ENCODE measurements at regions of chr13 and their contacts with region 1.

Region 1: DNA sequence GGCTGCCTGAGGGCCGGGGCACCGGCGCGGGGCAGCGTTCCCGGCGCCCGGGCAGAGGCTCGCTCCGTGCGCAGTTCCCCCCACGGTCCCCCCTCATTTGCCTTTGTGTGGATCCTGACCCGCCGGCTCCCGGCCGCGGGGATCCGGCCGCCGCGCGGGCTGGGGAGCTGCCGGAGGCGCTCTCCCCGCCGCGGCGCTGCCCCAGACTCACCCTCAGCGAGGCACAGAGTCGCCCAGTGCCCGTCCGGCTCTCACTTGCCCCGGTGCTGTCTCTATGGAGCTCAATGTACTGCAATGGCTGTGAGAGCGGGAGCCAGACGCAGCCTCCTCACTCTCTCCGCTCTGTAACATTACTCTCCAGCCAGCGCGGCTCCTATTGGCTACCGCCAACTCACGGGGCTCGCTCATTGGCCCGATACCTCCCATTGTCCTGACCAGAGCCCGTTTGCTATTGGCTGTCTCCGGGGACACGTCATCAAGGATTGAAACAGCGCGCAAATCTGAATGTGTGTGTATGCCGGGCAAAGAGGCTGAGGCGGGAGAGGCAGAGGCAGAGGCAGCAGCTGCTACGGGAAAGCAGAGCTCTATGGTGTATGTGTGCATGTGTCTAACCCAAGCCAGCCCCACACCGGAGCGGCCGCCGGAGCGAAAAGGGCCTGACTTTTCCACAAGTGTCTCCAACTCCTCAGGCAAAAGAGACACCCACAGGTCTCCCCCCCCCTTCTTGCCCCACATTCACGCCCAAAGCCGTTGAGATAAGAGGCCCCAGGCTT is at the start of gene HMGB1:
- DNase-seq: peak; percentile 99
- H3K4me3 Mint-ChIP-seq: peak within 1 kb of the TSS; percentile 89
- H3K27ac Mint-ChIP-seq: peak within 1 kb of the TSS; percentile 99
- H3K4me1 Mint-ChIP-seq: peaks cover 31% of the 10 kb centered on the region
- H3K27me3 Mint-ChIP-seq: peaks cover 3% of the 10 kb centered on the region
- total RNA-seq, gene HMGB1: 689 to 693 TPM

Region 2: DNA sequence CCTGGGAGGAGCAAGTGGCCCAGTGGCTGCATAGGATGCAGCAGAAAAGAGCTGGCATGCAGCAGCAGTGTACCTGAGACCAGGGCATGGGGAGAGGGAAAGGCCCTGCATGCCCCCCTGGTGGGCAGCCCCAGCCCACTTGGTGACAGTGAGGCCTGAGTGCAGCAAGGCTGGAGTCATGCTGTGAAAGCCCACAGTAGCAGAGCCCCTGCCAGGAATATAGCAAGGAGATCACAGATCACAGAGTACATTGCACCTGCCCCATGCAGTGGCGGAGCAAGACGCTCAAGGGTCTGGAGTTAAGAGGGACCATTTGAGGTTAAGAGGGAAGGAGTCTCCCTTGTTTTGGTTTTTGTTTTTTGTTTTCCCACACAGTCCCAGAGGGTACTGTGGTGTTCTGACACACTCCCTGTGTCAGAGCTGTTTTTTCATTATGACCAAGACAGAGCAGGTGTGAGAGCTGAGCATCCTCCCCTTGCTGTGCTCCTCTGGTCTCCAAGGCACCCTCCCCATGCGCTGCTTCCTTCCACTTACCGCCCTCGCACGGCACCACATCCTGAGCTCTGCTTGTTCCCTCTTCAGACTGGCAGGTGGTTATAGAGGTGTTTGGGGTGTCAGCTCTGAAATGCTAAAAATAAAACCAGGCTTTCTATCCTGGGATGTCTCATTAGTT is 530.3 kb before region 1 on chr13:
- CTCF ChIA-PET with region 1: no interaction called
- POLR2A ChIA-PET with region 1: no interaction called
- intact Hi-C with region 1: loop called (anchors 5 kb)
- DNase-seq: peak; percentile 94
- H3K4me3 Mint-ChIP-seq: peak overlapping the region; percentile 77
- H3K27ac Mint-ChIP-seq: peak overlapping the region; percentile 84
- H3K4me1 Mint-ChIP-seq: peaks cover 50% of the 10 kb centered on the region
- H3K27me3 Mint-ChIP-seq: no peaks in the 10 kb centered on the region

Region 3: DNA sequence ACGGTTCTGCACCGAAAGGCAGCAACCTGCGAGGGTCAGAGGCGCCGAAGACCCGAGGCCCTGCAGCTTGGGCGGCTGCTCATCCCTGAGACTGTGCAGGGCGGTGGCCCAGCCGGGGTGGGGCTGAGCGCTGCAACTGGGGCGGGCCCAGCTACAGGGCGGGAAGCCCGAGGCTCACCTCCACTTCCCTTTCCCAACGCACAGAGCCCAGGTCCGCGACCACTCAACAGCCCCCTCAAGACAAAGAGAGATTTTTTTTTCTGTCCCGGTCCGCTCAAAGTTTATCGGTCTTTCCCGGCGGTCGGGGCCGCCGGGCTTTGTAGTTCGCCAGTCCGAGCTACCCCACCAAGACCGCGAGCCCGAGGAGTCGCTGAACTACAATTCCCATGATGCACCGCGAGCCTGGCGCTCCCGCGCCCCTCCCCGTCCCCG is 159.0 kb before region 1 on chr13:
- CTCF ChIA-PET with region 1: interaction called, 3 read pairs
- POLR2A ChIA-PET with region 1: no interaction called
- intact Hi-C with region 1: loop called (anchors 2 kb)
- DNase-seq: peak; percentile 94
- H3K4me3 Mint-ChIP-seq: peak overlapping the region; percentile 84
- H3K27ac Mint-ChIP-seq: peak overlapping the region; percentile 87
- H3K4me1 Mint-ChIP-seq: peaks cover 49% of the 10 kb centered on the region
- H3K27me3 Mint-ChIP-seq: no peaks in the 10 kb centered on the region

Region 4: DNA sequence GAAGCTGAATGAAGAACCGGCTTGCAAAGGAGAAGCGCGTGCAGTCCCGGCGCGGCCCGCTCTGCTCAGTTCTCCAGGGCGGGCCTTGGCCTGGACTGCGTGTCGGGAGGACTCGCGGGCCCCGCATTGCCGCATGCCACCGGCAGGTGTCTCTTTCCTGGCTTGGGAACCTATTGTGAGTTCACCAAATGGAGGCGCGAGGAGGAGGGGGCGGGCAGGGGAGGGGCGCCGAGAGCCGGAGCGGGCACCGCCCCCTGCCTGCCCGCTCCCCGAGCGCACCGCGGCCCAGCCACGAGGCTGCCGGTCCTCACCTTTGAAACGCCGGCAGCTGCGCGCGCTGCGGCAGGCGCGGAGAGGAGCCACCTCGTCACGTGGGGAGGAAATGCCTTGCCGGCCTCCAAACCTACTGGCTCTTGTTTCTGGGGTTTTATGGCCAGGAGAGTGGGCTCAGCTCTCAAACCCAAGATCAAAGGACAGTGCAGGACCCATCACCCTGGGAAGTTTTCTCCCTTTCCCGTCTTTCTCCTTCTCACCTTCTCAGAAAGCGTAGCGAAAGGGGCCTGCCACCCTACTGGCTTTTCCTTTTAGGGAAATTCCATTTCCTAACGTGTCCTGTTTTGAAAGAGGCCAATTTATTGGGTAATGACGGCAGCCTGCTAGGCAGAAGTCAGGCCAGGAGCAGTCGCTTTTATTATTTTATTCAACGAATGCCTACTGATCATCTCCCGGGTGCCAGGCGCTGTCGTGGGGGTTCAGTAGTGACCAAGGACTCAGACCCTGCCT is 57.3 kb before region 1 on chr13:
- CTCF ChIA-PET with region 1: interaction called, 6 read pairs
- POLR2A ChIA-PET with region 1: no interaction called
- intact Hi-C with region 1: loop called (anchors 1 kb)
- DNase-seq: peak; percentile 97
- H3K4me3 Mint-ChIP-seq: peak overlapping the region; percentile 43
- H3K27ac Mint-ChIP-seq: peak overlapping the region; percentile 2
- H3K4me1 Mint-ChIP-seq: peaks cover 18% of the 10 kb centered on the region
- H3K27me3 Mint-ChIP-seq: no peaks in the 10 kb centered on the region

Region 5: DNA sequence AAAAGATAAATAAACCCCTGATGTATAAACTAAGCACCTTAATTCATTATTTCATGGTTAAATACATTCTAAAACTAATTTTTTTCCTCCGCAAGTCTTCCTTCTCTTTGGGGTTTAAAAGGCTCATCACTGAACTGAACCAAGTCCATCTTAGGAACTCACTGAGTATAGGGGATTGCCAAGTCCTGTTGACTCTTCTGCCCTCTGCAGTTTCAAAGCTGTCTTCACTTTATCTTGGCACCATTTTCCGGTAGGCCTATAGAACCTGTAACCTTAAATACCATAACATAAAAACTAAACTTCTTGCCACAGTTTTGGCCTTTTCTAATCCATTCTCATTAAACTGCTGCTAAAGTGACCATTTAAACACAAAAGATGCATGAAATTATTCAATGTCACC is 85.4 kb after region 1 on chr13:
- CTCF ChIA-PET with region 1: no interaction called
- POLR2A ChIA-PET with region 1: no interaction called
- intact Hi-C with region 1: loop called (anchors 5 kb)
- DNase-seq: no peak
- H3K4me3 Mint-ChIP-seq: no peak overlapping the region
- H3K27ac Mint-ChIP-seq: no peak overlapping the region
- H3K4me1 Mint-ChIP-seq: no peaks in the 10 kb centered on the region
- H3K27me3 Mint-ChIP-seq: no peaks in the 10 kb centered on the region

Region 6: GRCh38 chr13:30725326-30726085 is 259.7 kb after region 1 on chr13:
- CTCF ChIA-PET with region 1: no interaction called
- POLR2A ChIA-PET with region 1: no interaction called
- intact Hi-C with region 1: no loop called
- DNase-seq: no peak
- H3K4me3 Mint-ChIP-seq: no peak overlapping the region
- H3K27ac Mint-ChIP-seq: no peak overlapping the region
- H3K4me1 Mint-ChIP-seq: peaks cover 2% of the 10 kb centered on the region
- H3K27me3 Mint-ChIP-seq: peaks cover 2% of the 10 kb centered on the region

Region 7: GRCh38 chr13:30739761-30740642 is 274.2 kb after region 1 on chr13:
- CTCF ChIA-PET with region 1: no interaction called
- POLR2A ChIA-PET with region 1: interaction called, 4 read pairs
- intact Hi-C with region 1: loop called (anchors 2 kb)
- DNase-seq: peak; percentile 83
- H3K4me3 Mint-ChIP-seq: peak overlapping the region; percentile 69
- H3K27ac Mint-ChIP-seq: peak overlapping the region; percentile 87
- H3K4me1 Mint-ChIP-seq: peaks cover 76% of the 10 kb centered on the region
- H3K27me3 Mint-ChIP-seq: peaks cover 2% of the 10 kb centered on the region

Region 8: GRCh38 chr13:31161828-31162590 is 696.2 kb after region 1 on chr13 and contains the start of gene HSPH1:
- CTCF ChIA-PET with region 1: no interaction called
- POLR2A ChIA-PET with region 1: no interaction called
- intact Hi-C with region 1: loop called (anchors 1 kb)
- DNase-seq: peak; percentile 99
- H3K4me3 Mint-ChIP-seq: peak within 1 kb of the TSS; percentile 92
- H3K27ac Mint-ChIP-seq: peak within 1 kb of the TSS; percentile 99
- H3K4me1 Mint-ChIP-seq: peaks cover 35% of the 10 kb centered on the region
- H3K27me3 Mint-ChIP-seq: no peaks in the 10 kb centered on the region
- total RNA-seq, gene HSPH1: 214 to 221 TPM